Left ventricle myocardium inferior (tissue), 1 donor: ENCODE measurements at regions of chr1 and their contacts with region 1.

Region 1: GRCh38 chr1:181044449-181044966 is 10.7 kb downstream of the MR1 start:
- DNase-seq: no peak
- H3K4me3 ChIP-seq: no peak overlapping the region
- H3K27ac ChIP-seq: no peak overlapping the region
- H3K4me1 ChIP-seq: peaks cover 12% of the 10 kb centered on the region
- H3K27me3 ChIP-seq: no peaks in the 10 kb centered on the region
- CTCF ChIP-seq: no peak

Region 2: GRCh38 chr1:181083842-181084605 is 39.5 kb after region 1 on chr1:
- intact Hi-C with region 1: loop called (anchors 5 kb)
- DNase-seq: no peak
- H3K4me3 ChIP-seq: no peak overlapping the region
- H3K27ac ChIP-seq: no peak overlapping the region
- H3K4me1 ChIP-seq: peaks cover 16% of the 10 kb centered on the region
- H3K27me3 ChIP-seq: no peaks in the 10 kb centered on the region
- CTCF ChIP-seq: peak; percentile 70